Activated naive CD4-positive, alpha-beta T cell treated with anti-CD3 and anti-CD28 coated beads, Interleukin-2, amount 10 ng/mL, durations not matched to agents 7 days and 5 days (primary cell): ENCODE measurements at regions of chr1 and their contacts with region 1.

Region 1: GRCh38 chr1:212665241-212666115 is 34.2 kb downstream of the BATF3 start:
- DNase-seq: peak; percentile 85
- H3K4me3 Mint-ChIP-seq: peak overlapping the region; percentile 73
- H3K27ac Mint-ChIP-seq: no peak overlapping the region
- H3K4me1 Mint-ChIP-seq: peaks cover 10% of the 10 kb centered on the region
- H3K27me3 Mint-ChIP-seq: peaks cover 12% of the 10 kb centered on the region

Region 2: DNA sequence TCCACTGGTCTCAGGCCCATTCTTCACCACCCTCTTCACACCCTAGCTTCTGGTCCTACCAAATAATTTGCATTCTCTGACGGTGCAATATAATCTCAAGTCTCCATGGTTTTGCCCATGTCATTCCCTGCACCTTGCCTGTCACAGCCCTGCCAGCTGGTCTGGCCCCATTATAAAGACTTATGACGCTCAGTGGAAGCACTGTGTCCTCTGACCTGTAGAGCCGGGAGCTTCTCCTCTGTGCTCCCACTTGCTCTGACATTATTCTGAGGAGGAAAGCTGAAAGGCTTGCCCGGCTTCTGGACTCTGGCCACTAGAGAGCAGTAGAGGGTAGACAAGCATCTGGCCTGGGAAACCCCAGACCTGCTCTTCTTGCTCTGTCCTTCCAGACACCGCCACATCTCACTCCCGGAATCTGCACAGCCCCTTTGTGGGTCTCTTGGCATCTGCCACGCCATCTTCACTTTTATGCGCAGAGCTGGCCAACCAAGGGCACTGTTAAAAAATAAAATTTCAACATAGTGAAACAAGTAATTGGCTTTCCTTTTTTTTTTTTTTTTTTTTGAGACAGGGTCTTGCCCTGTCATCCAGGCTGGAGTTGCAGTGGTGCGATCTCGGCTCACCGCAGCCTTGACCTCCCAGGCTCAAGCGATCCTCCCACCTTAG is 188.3 kb before region 1 on chr1:
- CTCF ChIA-PET with region 1: interaction called, 29 read pairs
- DNase-seq: peak; percentile 85
- H3K4me3 Mint-ChIP-seq: no peak overlapping the region
- H3K27ac Mint-ChIP-seq: no peak overlapping the region
- H3K4me1 Mint-ChIP-seq: peaks cover 22% of the 10 kb centered on the region
- H3K27me3 Mint-ChIP-seq: peaks cover 49% of the 10 kb centered on the region

Region 3: DNA sequence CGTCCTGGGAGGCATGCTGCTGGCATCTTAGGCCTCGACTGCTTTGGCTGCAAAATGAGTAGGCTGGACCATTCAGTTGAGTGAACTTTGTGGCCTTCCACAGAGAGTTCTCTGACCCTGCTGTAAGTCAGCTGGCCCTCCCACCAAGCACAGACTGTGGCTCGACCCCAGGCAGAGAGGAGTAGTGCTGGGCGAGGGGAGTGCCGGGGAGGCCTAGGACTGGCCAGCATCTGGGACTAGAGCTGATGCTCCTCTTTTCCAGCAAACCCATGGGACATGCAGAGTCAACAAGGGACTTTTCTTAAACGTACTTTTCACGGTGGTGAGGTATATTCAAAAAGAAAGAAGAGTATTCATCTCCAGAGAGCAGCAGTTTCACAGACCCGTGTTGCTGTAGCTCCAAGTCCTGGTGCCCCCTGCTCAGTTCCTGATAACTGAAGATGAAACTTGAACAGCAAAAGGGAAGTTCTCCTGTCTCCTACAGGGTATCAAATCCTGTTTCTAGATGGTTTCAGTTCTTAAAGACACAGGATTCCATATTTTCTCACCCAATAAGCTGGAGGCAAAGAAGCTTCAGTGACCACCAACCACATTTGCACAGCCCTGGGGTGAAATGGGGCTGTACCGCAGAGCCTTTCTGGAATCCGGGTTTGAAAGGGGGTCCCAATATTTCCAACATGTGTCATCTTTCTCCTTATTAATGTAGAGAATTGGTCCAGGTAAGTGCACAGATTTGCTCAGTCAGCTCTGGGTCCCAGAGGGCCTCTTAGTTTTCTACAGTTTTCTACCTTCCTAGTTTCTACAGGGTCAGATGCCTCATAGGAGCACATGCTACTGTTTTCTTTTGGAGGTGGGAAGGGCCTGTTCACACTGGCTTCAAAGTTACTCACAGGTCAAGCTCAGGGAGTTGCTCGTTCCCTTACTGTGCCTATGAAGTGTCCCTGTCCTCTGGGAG is 13.3 kb after region 1 on chr1:
- CTCF ChIA-PET with region 1: interaction called, 18 read pairs
- DNase-seq: no peak
- H3K4me3 Mint-ChIP-seq: no peak overlapping the region
- H3K27ac Mint-ChIP-seq: no peak overlapping the region
- H3K4me1 Mint-ChIP-seq: peaks cover 28% of the 10 kb centered on the region
- H3K27me3 Mint-ChIP-seq: peaks cover 16% of the 10 kb centered on the region

Region 4: GRCh38 chr1:212721388-212722247 is 56.1 kb after region 1 on chr1:
- CTCF ChIA-PET with region 1: no interaction called
- DNase-seq: peak; percentile 49
- H3K4me3 Mint-ChIP-seq: peak overlapping the region; percentile 16
- H3K27ac Mint-ChIP-seq: peak overlapping the region; percentile 64
- H3K4me1 Mint-ChIP-seq: peaks cover 31% of the 10 kb centered on the region
- H3K27me3 Mint-ChIP-seq: peaks cover 4% of the 10 kb centered on the region

Region 5: GRCh38 chr1:212749821-212750535 is 84.5 kb after region 1 on chr1:
- CTCF ChIA-PET with region 1: interaction called, 15 read pairs
- DNase-seq: no peak
- H3K4me3 Mint-ChIP-seq: no peak overlapping the region
- H3K27ac Mint-ChIP-seq: no peak overlapping the region
- H3K4me1 Mint-ChIP-seq: peaks cover 44% of the 10 kb centered on the region
- H3K27me3 Mint-ChIP-seq: no peaks in the 10 kb centered on the region

Region 6: DNA sequence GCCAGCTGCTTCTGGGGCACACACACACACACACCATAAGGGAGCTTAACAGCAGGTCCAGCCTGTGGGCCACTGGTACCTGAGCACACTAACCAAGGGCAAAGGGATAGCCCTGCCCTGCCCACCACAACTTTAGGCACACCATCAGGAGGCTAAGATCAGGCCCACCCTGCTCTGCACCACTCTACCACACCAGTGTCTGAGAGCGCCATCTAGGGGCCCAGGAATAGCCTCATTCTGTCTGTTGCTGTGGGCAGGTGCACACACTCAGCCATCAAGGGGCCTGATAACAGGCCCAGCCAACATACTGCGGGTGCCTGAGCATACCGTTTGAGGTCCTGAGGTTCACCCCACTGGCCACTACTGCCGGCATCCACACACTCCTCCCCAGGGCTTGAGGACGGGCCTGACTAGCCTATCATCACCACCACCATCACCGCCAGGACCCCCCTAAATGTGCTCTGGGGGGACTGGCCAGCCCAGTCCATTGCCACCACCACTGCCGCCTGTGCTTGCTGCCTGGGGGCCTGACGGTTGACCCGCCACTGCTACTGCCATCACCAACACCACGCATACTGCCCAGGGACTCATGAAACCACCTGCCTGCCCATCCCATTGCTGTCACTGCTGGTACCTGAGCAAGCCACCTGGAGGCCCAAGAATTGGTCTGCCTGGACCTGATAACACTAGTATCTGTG is 94.8 kb after region 1 on chr1:
- CTCF ChIA-PET with region 1: interaction called, 13 read pairs
- DNase-seq: peak; percentile 68
- H3K4me3 Mint-ChIP-seq: no peak overlapping the region
- H3K27ac Mint-ChIP-seq: no peak overlapping the region
- H3K4me1 Mint-ChIP-seq: peaks cover 10% of the 10 kb centered on the region
- H3K27me3 Mint-ChIP-seq: no peaks in the 10 kb centered on the region

Region 7: GRCh38 chr1:212777151-212777550 is 111.7 kb after region 1 on chr1:
- CTCF ChIA-PET with region 1: interaction called, 92 read pairs
- DNase-seq: no peak
- H3K4me3 Mint-ChIP-seq: no peak overlapping the region
- H3K27ac Mint-ChIP-seq: no peak overlapping the region
- H3K4me1 Mint-ChIP-seq: no peaks in the 10 kb centered on the region
- H3K27me3 Mint-ChIP-seq: no peaks in the 10 kb centered on the region

Region 8: GRCh38 chr1:212782422-212783154 is 117.1 kb after region 1 on chr1:
- CTCF ChIA-PET with region 1: interaction called, 92 read pairs
- DNase-seq: no peak
- H3K4me3 Mint-ChIP-seq: no peak overlapping the region
- H3K27ac Mint-ChIP-seq: no peak overlapping the region
- H3K4me1 Mint-ChIP-seq: no peaks in the 10 kb centered on the region
- H3K27me3 Mint-ChIP-seq: no peaks in the 10 kb centered on the region